ENCODE measurements at regions of chr22 and their contacts with region 1.

Region 1: GRCh38 chr22:42747701-42748513 is 27.2 kb upstream of the A4GALT start:
- DNase-seq: no peak
- H3K4me3 ChIP-seq: no peak overlapping the region
- CTCF ChIP-seq: no peak

Region 2: DNA sequence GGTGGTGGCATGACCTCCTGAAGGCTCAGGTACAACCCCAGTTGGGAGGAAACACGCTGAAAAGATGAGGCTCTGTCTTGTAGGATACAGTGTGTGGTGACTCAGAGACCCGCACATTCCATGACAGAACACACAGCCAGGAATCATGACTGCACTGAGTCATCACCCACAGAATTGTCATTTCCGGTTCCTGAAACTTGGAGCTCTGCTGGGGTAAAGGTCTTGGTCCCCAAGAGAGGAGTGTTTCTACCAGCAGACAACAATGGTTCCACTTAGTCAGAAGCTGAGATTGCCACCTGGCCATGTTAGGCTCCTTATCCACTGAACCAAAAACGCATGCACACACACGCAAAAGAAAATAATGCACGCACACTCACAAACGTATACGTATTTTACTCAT is 67.3 kb before region 1 on chr22:
- in situ Hi-C with region 1: no loop called
- DNase-seq: peak; percentile 66
- H3K4me3 ChIP-seq: no peak overlapping the region
- CTCF ChIP-seq: no peak

Region 3: DNA sequence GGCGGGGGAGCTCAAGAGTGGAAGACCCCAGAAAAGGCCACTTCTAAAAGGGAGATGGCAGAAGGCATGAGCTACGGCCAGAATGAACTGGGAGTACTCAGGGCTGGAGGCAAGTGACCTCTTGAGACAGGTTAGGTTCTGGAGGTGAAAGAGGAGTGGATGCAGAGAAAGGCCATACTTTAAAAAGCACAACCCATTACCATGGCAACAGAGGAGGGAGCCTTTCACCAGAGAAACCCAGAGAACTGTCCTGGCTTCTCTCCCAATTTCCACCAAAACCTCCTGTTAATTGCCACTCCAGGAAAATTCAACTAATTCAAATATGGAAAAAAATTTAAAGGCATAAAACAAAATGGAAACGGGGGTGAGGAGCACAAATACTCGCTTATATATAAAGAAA is 43.0 kb before region 1 on chr22:
- in situ Hi-C with region 1: loop called (anchors 5 kb)
- DNase-seq: no peak
- H3K4me3 ChIP-seq: no peak overlapping the region
- CTCF ChIP-seq: no peak

Measured in astrocyte of the cerebellum (primary cell).